ENCODE measurements at regions of chrX and their contacts with region 1.

Region 1: GRCh38 chrX:41561045-41561444 is 113.9 kb downstream of the NYX start:
- DNase-seq: peak; percentile 40 to 88 (median 80)
- H3K4me3 ChIP-seq: no peak overlapping the region
- H3K27ac ChIP-seq: peak overlapping the region; percentile 33 to 52
- H3K4me1 ChIP-seq: peaks cover 10 to 37% (median 23%) of the 10 kb centered on the region in 4 experiments
- H3K27me3 ChIP-seq: peaks cover 0 to 3% (median 0%) of the 10 kb centered on the region in 5 experiments

Region 2: GRCh38 chrX:41381685-41382084 is 179.4 kb before region 1 on chrX:
- CTCF ChIA-PET with region 1: no interaction called
- POLR2A ChIA-PET with region 1: no interaction called
- DNase-seq: no peak
- H3K4me3 ChIP-seq: no peak overlapping the region
- H3K27ac ChIP-seq: no peak overlapping the region
- H3K4me1 ChIP-seq: peaks cover 0 to 3% (median under 1%) of the 10 kb centered on the region in 4 experiments
- H3K27me3 ChIP-seq: peaks cover 0 to 6% (median 0%) of the 10 kb centered on the region in 5 experiments

Region 3: DNA sequence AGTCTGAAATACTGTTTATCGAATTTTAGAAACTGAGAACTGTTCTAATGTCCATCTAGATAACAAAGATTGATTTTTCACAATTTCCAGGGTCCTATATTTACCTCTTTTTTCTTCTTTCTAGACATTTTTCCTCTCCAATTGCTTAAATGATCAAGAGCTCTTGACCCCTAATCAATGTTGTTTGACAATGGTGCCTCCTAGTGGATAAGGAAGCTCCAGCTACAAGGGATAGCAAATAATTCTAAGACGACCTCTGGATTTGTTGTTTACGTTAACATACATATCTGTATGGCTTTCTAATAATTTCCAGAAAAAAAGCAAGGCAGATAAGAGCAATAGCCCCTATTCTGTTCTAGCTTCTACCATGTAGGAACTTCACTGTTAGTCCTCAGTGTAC is 198.8 kb after region 1 on chrX:
- CTCF ChIA-PET with region 1: interaction called, 14 read pairs
- POLR2A ChIA-PET with region 1: no interaction called
- DNase-seq: peak; percentile 35 to 44 (median 44)
- H3K4me3 ChIP-seq: no peak overlapping the region
- H3K27ac ChIP-seq: no peak overlapping the region
- H3K4me1 ChIP-seq: no peaks in the 10 kb centered on the region
- H3K27me3 ChIP-seq: peaks cover 0 to 8% (median 0%) of the 10 kb centered on the region in 5 experiments

Measured in common myeloid progenitor, CD34-positive (primary cell).